CD8-positive, alpha-beta memory T cell (primary cell): ENCODE measurements at regions of chr1 and their contacts with region 1.

Region 1: GRCh38 chr1:6554031-6554906 is at the start of gene NOL9:
- DNase-seq: peak; percentile 92 to 96 (median 94)
- H3K4me3 ChIP-seq: peak within 1 kb of the TSS; percentile 59
- H3K4me3 Mint-ChIP-seq: peak within 1 kb of the TSS; percentile 79 to 92 (median 80)
- H3K27ac ChIP-seq: peak within 1 kb of the TSS; percentile 80
- H3K27ac Mint-ChIP-seq: peak within 1 kb of the TSS; percentile 51 to 92 (median 78)
- H3K4me1 ChIP-seq: peaks cover 19% of the 10 kb centered on the region
- H3K4me1 Mint-ChIP-seq: peaks cover 11 to 18% (median 12%) of the 10 kb centered on the region in 3 donors
- H3K27me3 ChIP-seq: no peaks in the 10 kb centered on the region
- H3K27me3 Mint-ChIP-seq: no peaks in the 10 kb centered on the region
- total RNA-seq, gene NOL9: 55.8 to 57.8 TPM

Region 2: DNA sequence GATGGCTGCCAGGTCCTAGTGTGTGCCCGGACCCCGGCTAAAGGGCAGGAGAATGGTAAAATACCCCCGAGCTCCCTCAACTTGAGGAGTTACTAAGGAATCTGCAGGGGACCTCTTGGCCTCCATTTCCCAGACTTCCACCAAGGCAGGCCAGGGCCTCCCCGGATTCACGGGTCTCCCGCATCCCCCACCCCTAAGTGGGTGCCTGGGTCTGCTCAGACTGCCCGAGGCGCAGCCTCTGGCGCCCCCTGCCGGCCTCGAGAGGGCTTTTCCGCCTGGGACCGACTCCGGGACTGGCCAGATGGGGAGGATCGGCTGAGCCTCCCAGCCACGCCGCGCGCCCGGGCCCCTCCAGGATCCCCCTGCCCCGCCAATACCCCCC is 64.5 kb before region 1 on chr1:
- CTCF ChIA-PET with region 1: interaction called, 39 read pairs
- POLR2A ChIA-PET with region 1: interaction called, 7 read pairs
- DNase-seq: peak; percentile 67 to 82 (median 70)
- H3K4me3 ChIP-seq: peak overlapping the region; percentile 78
- H3K4me3 Mint-ChIP-seq: peak overlapping the region; percentile 68 to 89 (median 80)
- H3K27ac ChIP-seq: peak overlapping the region; percentile 43
- H3K27ac Mint-ChIP-seq: peak overlapping the region in 3 of 8 donors; percentile 17 to 24 (median 24)
- H3K4me1 ChIP-seq: peaks cover 23% of the 10 kb centered on the region
- H3K4me1 Mint-ChIP-seq: peaks cover 14 to 27% (median 18%) of the 10 kb centered on the region in 3 donors
- H3K27me3 ChIP-seq: peaks cover 16% of the 10 kb centered on the region
- H3K27me3 Mint-ChIP-seq: peaks cover 11 to 23% of the 10 kb centered on the region in 2 donors

Region 3: GRCh38 chr1:6513320-6513801 is 40.9 kb before region 1 on chr1:
- CTCF ChIA-PET with region 1: no interaction called
- POLR2A ChIA-PET with region 1: no interaction called
- DNase-seq: no peak
- H3K4me3 ChIP-seq: no peak overlapping the region
- H3K4me3 Mint-ChIP-seq: no peak overlapping the region
- H3K27ac ChIP-seq: no peak overlapping the region
- H3K27ac Mint-ChIP-seq: peak overlapping the region in 1 of 8 donors; percentile 65
- H3K4me1 ChIP-seq: no peaks in the 10 kb centered on the region
- H3K4me1 Mint-ChIP-seq: no peaks in the 10 kb centered on the region
- H3K27me3 ChIP-seq: peaks cover 3% of the 10 kb centered on the region
- H3K27me3 Mint-ChIP-seq: no peaks in the 10 kb centered on the region

Region 4: DNA sequence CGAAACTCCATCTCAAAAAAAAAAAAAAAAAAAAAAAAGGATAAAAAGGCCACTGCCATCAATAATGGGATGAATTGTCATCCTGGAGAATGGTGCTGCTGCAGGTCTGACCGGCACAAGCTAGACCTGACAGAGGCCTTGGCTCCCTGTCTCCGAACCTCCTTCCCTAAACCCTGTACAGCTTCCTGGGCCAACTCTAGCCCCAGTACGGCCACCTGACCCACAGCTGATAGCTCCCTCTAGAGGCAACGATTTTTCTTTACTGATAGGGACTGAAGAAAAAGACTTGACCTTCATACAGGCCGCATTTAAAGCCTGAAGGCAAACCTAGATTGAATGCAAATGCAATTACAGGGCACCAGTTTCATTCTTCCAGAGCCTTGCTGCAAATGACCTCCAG is 30.7 kb before region 1 on chr1:
- CTCF ChIA-PET with region 1: no interaction called
- POLR2A ChIA-PET with region 1: no interaction called
- DNase-seq: no peak
- H3K4me3 ChIP-seq: no peak overlapping the region
- H3K4me3 Mint-ChIP-seq: no peak overlapping the region
- H3K27ac ChIP-seq: no peak overlapping the region
- H3K27ac Mint-ChIP-seq: peak overlapping the region in 5 of 8 donors; percentile 14 to 68 (median 36)
- H3K4me1 ChIP-seq: no peaks in the 10 kb centered on the region
- H3K4me1 Mint-ChIP-seq: peaks cover 0 to 5% (median 0%) of the 10 kb centered on the region in 3 donors
- H3K27me3 ChIP-seq: no peaks in the 10 kb centered on the region
- H3K27me3 Mint-ChIP-seq: no peaks in the 10 kb centered on the region

Region 5: GRCh38 chr1:6535214-6535613 is 19.1 kb before region 1 on chr1:
- CTCF ChIA-PET with region 1: interaction called, 15 read pairs
- POLR2A ChIA-PET with region 1: interaction called, 6 read pairs
- DNase-seq: no peak
- H3K4me3 ChIP-seq: no peak overlapping the region
- H3K4me3 Mint-ChIP-seq: no peak overlapping the region
- H3K27ac ChIP-seq: no peak overlapping the region
- H3K27ac Mint-ChIP-seq: peak overlapping the region in 5 of 8 donors; percentile 38 to 70 (median 54)
- H3K4me1 ChIP-seq: no peaks in the 10 kb centered on the region
- H3K4me1 Mint-ChIP-seq: peaks cover 0 to 6% (median 1%) of the 10 kb centered on the region in 3 donors
- H3K27me3 ChIP-seq: no peaks in the 10 kb centered on the region
- H3K27me3 Mint-ChIP-seq: no peaks in the 10 kb centered on the region

Region 6: DNA sequence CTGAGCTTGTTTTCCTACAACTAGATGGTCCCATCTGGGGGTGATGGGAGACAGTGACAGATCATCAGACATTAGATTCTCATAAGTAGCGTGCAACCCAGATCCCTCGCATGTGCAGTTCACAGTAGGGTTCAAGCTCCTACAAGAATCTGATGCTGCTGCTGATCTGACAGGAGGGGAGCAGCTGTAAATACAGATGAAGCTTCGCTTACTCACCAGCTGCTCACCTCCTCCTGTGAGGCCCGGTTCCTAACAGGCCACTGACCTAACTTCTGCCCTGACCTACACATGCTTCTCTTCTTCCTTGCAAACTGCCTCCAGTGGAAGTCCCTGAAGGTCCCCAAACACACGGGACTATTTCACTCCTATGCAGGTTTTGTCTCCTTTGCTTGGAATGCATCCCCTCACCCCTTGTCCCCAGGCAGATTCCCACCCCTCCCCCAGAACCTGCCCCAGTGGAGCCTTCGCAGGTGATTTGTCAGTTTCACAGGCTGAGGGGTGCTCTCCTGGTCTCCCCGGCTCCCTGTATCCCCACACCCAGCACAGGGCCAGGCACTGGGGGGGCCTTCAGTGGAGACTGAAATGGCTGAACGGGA is 19.9 kb after region 1 on chr1:
- CTCF ChIA-PET with region 1: interaction called, 13 read pairs
- POLR2A ChIA-PET with region 1: no interaction called
- DNase-seq: no peak
- H3K4me3 ChIP-seq: no peak overlapping the region
- H3K4me3 Mint-ChIP-seq: no peak overlapping the region
- H3K27ac ChIP-seq: no peak overlapping the region
- H3K27ac Mint-ChIP-seq: no peak overlapping the region
- H3K4me1 ChIP-seq: peaks cover under 1% of the 10 kb centered on the region
- H3K4me1 Mint-ChIP-seq: peaks cover under 1 to 3% (median 1%) of the 10 kb centered on the region in 3 donors
- H3K27me3 ChIP-seq: no peaks in the 10 kb centered on the region
- H3K27me3 Mint-ChIP-seq: peaks cover 0 to 10% of the 10 kb centered on the region in 2 donors

Region 7: GRCh38 chr1:6579374-6580118 is 25.3 kb after region 1 on chr1 and contains the start of gene ZBTB48:
- CTCF ChIA-PET with region 1: interaction called, 13 read pairs
- POLR2A ChIA-PET with region 1: no interaction called
- DNase-seq: peak; percentile 95 to 98 (median 96)
- H3K4me3 ChIP-seq: peak within 1 kb of the TSS; percentile 85
- H3K4me3 Mint-ChIP-seq: peak within 1 kb of the TSS; percentile 89 to 99 (median 96)
- H3K27ac ChIP-seq: peak within 1 kb of the TSS; percentile 88
- H3K27ac Mint-ChIP-seq: peak within 1 kb of the TSS; percentile 87 to 98 (median 98)
- H3K4me1 ChIP-seq: peaks cover 30% of the 10 kb centered on the region
- H3K4me1 Mint-ChIP-seq: peaks cover 33 to 43% (median 36%) of the 10 kb centered on the region in 3 donors
- H3K27me3 ChIP-seq: no peaks in the 10 kb centered on the region
- H3K27me3 Mint-ChIP-seq: no peaks in the 10 kb centered on the region
- total RNA-seq, gene ZBTB48: 25.0 to 31.7 TPM

Region 8: DNA sequence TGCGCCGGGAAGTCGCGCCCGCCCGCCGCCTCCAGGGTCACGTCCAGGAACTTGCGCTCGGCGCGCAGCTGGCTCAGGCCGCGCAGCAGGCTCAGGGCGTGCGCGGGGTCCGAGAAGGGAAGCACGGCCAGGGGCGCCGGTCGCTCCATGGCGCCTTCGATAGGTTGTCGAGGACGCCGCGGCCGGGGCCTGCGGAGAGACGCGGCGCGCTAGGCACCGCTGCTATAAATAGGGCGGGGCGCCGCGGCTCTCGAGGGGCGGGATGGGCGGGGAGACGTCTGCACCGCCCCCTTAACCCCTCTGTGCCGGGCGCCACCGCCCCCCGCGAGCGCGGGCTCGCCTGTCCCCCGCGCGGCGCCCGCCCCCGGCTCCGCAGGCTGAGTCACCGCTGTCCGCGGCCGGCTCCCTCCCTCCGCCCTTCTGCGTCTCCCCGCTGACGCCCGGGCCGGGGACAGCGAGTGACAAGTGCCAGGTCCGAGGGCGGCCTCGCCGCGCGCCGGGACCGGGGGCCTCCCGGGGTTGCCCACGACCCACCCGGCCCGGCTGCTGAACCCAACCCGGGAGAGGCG is 48.5 kb after region 1 on chr1 and contains the start of gene KLHL21:
- CTCF ChIA-PET with region 1: interaction called, 9 read pairs
- POLR2A ChIA-PET with region 1: interaction called, 14 read pairs
- DNase-seq: peak; percentile 80 to 90 (median 82)
- H3K4me3 ChIP-seq: peak within 1 kb of the TSS; percentile 81
- H3K4me3 Mint-ChIP-seq: peak within 1 kb of the TSS; percentile 92 to 99 (median 98)
- H3K27ac ChIP-seq: peak within 1 kb of the TSS; percentile 94
- H3K27ac Mint-ChIP-seq: peak within 1 kb of the TSS; percentile 91 to 99 (median 96)
- H3K4me1 ChIP-seq: peaks cover 36% of the 10 kb centered on the region
- H3K4me1 Mint-ChIP-seq: peaks cover 31 to 44% (median 33%) of the 10 kb centered on the region in 3 donors
- H3K27me3 ChIP-seq: no peaks in the 10 kb centered on the region
- H3K27me3 Mint-ChIP-seq: no peaks in the 10 kb centered on the region
- total RNA-seq, gene KLHL21: 36.4 to 37.3 TPM

Region 9: DNA sequence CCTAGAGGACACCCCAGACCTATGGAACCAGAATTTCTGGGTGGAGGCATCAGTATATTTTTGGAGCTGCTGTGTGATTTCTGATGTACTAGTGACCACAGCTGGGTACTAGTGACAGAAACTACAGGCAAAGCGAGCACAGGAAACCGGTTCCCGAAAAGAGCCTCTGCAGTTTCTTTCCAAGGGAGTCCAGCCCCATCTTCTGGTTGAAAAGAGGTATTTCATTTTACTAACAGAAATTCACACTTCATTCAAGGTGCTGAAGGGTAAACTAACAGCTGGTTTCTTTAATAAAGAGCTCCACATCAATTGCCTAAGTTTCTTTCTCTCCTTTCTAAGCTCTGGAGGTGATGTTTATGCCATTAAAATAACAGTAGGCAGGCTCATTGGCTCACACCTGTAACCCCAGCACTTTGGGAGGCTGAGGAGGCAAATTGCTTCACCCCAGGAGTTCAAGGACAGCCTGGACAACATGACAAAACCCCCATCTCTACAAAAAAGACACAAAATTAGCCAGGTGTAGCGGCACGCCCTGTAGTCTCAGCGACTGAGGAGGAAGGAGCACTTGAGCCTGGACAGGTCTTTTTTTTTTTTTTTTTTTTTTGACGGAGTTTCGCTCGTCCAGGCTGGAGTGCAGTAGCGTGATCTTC is 92.4 kb after region 1 on chr1:
- CTCF ChIA-PET with region 1: interaction called, 17 read pairs
- POLR2A ChIA-PET with region 1: no interaction called
- DNase-seq: peak in 2 of 5 donors; percentile 30 to 49
- H3K4me3 ChIP-seq: no peak overlapping the region
- H3K4me3 Mint-ChIP-seq: no peak overlapping the region
- H3K27ac ChIP-seq: no peak overlapping the region
- H3K27ac Mint-ChIP-seq: peak overlapping the region in 1 of 8 donors; percentile 29
- H3K4me1 ChIP-seq: no peaks in the 10 kb centered on the region
- H3K4me1 Mint-ChIP-seq: no peaks in the 10 kb centered on the region
- H3K27me3 ChIP-seq: no peaks in the 10 kb centered on the region
- H3K27me3 Mint-ChIP-seq: no peaks in the 10 kb centered on the region